ENCODE measurements at regions of chr3 and their contacts with region 1.

Region 1: GRCh38 chr3:28218071-28218916 is 23.1 kb upstream of the CMC1 start:
- DNase-seq: no peak
- H3K4me3 ChIP-seq: no peak overlapping the region
- H3K27ac ChIP-seq: no peak overlapping the region
- H3K4me1 ChIP-seq: no peaks in the 10 kb centered on the region
- H3K27me3 ChIP-seq: no peaks in the 10 kb centered on the region
- CTCF ChIP-seq: no peak
- POLR2A ChIP-seq: no peak

Region 2: GRCh38 chr3:27737091-27737490 is 481.2 kb before region 1 on chr3:
- intact Hi-C with region 1: no loop called
- DNase-seq: no peak
- H3K4me3 ChIP-seq: no peak overlapping the region
- H3K27ac ChIP-seq: no peak overlapping the region
- H3K4me1 ChIP-seq: no peaks in the 10 kb centered on the region
- H3K27me3 ChIP-seq: no peaks in the 10 kb centered on the region
- CTCF ChIP-seq: no peak
- POLR2A ChIP-seq: no peak

Region 3: DNA sequence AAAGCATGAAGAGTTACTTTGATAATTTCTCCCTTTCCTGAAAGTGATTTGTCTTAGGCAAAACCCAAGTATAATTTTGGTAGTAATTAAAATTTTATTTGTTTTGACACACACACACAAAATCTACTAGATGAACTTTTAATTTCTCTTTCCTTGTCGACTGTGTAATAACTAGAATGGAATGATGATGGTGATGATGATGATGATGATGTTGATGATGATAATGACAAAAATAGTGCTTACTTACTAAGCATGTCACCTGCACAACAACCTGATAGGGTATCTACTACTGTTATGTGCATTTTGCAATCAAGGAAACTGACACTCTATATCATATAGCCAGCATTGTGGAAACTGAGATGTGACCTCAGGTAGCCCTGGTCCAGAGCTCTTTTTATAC is 39.4 kb before region 1 on chr3:
- intact Hi-C with region 1: no loop called
- DNase-seq: no peak
- H3K4me3 ChIP-seq: no peak overlapping the region
- H3K27ac ChIP-seq: no peak overlapping the region
- H3K4me1 ChIP-seq: no peaks in the 10 kb centered on the region
- H3K27me3 ChIP-seq: no peaks in the 10 kb centered on the region
- CTCF ChIP-seq: no peak
- POLR2A ChIP-seq: no peak

Region 4: DNA sequence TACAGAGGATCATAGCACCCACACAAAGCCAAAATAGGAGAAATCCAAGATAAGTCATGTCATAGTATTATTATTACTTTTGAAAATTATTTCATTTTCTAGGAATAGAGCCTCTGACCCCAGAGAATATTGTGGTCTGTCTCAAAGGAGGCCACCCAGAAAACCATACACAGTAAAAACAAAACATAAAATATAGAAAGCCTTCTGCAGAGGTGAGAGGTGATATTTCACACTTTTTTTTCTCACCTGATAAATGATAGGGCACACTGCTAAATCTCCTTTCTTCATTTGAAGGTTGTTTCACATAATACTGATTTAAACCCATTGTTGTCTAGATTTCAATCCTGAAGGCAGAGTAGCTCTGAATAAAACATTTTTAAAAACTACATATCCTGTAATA is 16.2 kb after region 1 on chr3:
- intact Hi-C with region 1: loop called (anchors 2 kb)
- DNase-seq: no peak
- H3K4me3 ChIP-seq: no peak overlapping the region
- H3K27ac ChIP-seq: no peak overlapping the region
- H3K4me1 ChIP-seq: no peaks in the 10 kb centered on the region
- H3K27me3 ChIP-seq: no peaks in the 10 kb centered on the region
- CTCF ChIP-seq: no peak
- POLR2A ChIP-seq: no peak

Measured in breast epithelium (tissue), 4 donors.